ENCODE measurements at regions of chr16 and their contacts with region 1.

Region 1: GRCh38 chr16:47141773-47142485 is 1.8 kb downstream of the NETO2 start:
- DNase-seq: peak; percentile 53 to 83 (median 75)
- ATAC-seq: peak; percentile 86
- H3K4me3 ChIP-seq: peak overlapping the region; percentile 30
- H3K4me3 Mint-ChIP-seq: peak overlapping the region; percentile 72 to 89 (median 84)
- H3K27ac ChIP-seq: no peak overlapping the region
- H3K27ac Mint-ChIP-seq: peak overlapping the region in 2 of 9 donors; percentile 14 to 77
- H3K4me1 ChIP-seq: peaks cover 10 to 15% of the 10 kb centered on the region in 2 donors
- H3K4me1 Mint-ChIP-seq: peaks cover 12 to 29% (median 17%) of the 10 kb centered on the region in 7 donors
- H3K27me3 ChIP-seq: peaks cover 0 to 12% of the 10 kb centered on the region in 2 donors
- H3K27me3 Mint-ChIP-seq: peaks cover 22 to 37% (median 34%) of the 10 kb centered on the region in 5 donors

Region 2: DNA sequence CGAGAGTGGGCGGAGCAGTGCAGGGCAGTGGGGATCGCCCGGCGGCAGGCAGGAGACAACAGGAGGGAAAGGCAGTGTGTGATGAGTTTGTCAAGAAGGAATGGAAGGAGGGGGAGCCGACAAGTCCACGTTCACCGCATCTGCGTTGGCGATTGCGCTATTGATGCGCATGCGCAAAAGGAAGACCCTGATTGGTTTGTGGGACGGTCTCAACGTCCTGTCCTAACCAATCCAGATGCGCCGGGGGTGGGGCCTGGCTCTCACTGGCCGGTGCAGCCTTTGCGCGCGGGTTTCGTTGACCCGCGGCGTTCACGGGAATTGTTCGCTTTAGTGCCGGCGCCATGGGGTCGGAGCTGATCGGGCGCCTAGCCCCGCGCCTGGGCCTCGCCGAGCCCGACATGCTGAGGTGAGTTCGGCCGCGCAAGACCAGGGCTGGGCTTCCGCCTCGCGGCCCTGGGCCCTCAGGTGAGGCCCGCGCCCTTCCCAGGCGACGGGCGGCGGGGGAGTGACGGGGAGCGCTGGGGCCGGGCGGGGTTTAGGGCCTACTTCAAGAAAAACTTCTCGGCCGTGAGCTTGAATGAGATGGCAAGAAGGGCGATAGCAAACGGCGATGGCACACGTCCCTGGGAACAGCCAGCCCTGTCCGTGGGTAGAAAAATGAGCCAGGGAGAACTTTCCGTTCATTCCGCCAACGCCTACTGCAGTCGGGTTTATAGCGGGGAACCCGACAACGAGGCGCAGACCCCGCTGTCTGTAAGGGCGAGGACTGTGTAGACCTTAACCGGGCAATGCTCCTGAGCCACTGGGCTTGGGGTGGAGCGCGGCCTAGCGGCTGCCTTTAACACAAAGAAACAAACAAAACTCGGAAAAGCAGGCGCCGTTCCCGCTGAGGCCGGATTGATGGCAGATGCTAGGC is 452.3 kb before region 1 on chr16 and contains the start of gene ORC6:
- CTCF ChIA-PET with region 1: no interaction called
- POLR2A ChIA-PET with region 1: no interaction called
- intact Hi-C with region 1: loop called in 1 of 2 experiments (anchors 2 kb)
- DNase-seq: peak; percentile 90 to 99 (median 97)
- ATAC-seq: peak; percentile 85
- H3K4me3 ChIP-seq: peak within 1 kb of the TSS; percentile 99
- H3K4me3 Mint-ChIP-seq: no peak within 1 kb of the TSS
- H3K27ac ChIP-seq: peak within 1 kb of the TSS; percentile 94
- H3K27ac Mint-ChIP-seq: no peak within 1 kb of the TSS
- H3K4me1 ChIP-seq: peaks cover 16 to 22% of the 10 kb centered on the region in 2 donors
- H3K4me1 Mint-ChIP-seq: peaks cover 25 to 48% (median 36%) of the 10 kb centered on the region in 7 donors
- H3K27me3 ChIP-seq: no peaks in the 10 kb centered on the region
- H3K27me3 Mint-ChIP-seq: no peaks in the 10 kb centered on the region
- total RNA-seq, gene ORC6: 2.7 to 27.3 (median 5.1) TPM

Region 3: GRCh38 chr16:47037746-47038458 is 104.0 kb before region 1 on chr16:
- CTCF ChIA-PET with region 1: no interaction called
- POLR2A ChIA-PET with region 1: no interaction called
- intact Hi-C with region 1: loop called (anchors 1 kb)
- DNase-seq: peak; percentile 69 to 95 (median 83)
- ATAC-seq: peak; percentile 99
- H3K4me3 ChIP-seq: peak overlapping the region; percentile 62
- H3K4me3 Mint-ChIP-seq: peak overlapping the region; percentile 25 to 85 (median 74)
- H3K27ac ChIP-seq: peak overlapping the region; percentile 27
- H3K27ac Mint-ChIP-seq: peak overlapping the region in 1 of 9 donors; percentile 38
- H3K4me1 ChIP-seq: no peaks in the 10 kb centered on the region
- H3K4me1 Mint-ChIP-seq: peaks cover 0 to 8% (median 4%) of the 10 kb centered on the region in 7 donors
- H3K27me3 ChIP-seq: no peaks in the 10 kb centered on the region
- H3K27me3 Mint-ChIP-seq: peaks cover 0 to 13% (median 0%) of the 10 kb centered on the region in 5 donors

Region 4: DNA sequence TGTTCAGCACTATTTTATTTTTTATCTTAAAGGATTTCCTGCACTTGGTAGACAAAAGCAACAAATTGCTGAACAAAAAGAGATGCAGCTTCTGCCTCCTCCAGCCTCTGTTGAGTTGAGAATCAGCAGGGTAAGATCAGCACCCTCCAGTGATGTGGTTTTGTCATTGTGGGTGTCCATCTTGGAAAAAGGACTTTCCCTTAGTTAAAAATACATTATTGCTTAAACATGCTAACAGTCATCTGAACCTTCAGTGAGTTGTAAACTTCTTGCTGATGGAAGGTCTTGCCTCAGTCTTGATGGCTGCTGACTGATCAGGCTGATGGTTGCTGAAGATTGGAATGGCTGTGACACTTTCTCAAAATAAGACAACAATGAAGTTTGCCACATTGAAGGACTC is 420.4 kb after region 1 on chr16:
- CTCF ChIA-PET with region 1: no interaction called
- POLR2A ChIA-PET with region 1: no interaction called
- intact Hi-C with region 1: no loop called
- DNase-seq: no peak
- ATAC-seq: no peak
- H3K4me3 ChIP-seq: no peak overlapping the region
- H3K4me3 Mint-ChIP-seq: no peak overlapping the region
- H3K27ac ChIP-seq: no peak overlapping the region
- H3K27ac Mint-ChIP-seq: no peak overlapping the region
- H3K4me1 ChIP-seq: peaks cover 9 to 12% of the 10 kb centered on the region in 2 donors
- H3K4me1 Mint-ChIP-seq: peaks cover 27 to 43% (median 34%) of the 10 kb centered on the region in 7 donors
- H3K27me3 ChIP-seq: no peaks in the 10 kb centered on the region
- H3K27me3 Mint-ChIP-seq: no peaks in the 10 kb centered on the region

Region 5: GRCh38 chr16:47592232-47592631 is 450.3 kb after region 1 on chr16:
- CTCF ChIA-PET with region 1: no interaction called
- POLR2A ChIA-PET with region 1: no interaction called
- intact Hi-C with region 1: loop called in 1 of 2 experiments (anchors 5 kb)
- DNase-seq: no peak
- ATAC-seq: no peak
- H3K4me3 ChIP-seq: no peak overlapping the region
- H3K4me3 Mint-ChIP-seq: no peak overlapping the region
- H3K27ac ChIP-seq: no peak overlapping the region
- H3K27ac Mint-ChIP-seq: peak overlapping the region in 2 of 9 donors; percentile 6 to 9
- H3K4me1 ChIP-seq: peaks cover 0 to 7% of the 10 kb centered on the region in 2 donors
- H3K4me1 Mint-ChIP-seq: peaks cover 0 to 12% (median 0%) of the 10 kb centered on the region in 7 donors
- H3K27me3 ChIP-seq: no peaks in the 10 kb centered on the region
- H3K27me3 Mint-ChIP-seq: no peaks in the 10 kb centered on the region

Region 6: GRCh38 chr16:48117217-48118105 is 975.5 kb after region 1 on chr16:
- CTCF ChIA-PET with region 1: interaction called, 4 read pairs
- POLR2A ChIA-PET with region 1: no interaction called
- intact Hi-C with region 1: loop called (anchors 1 kb)
- DNase-seq: peak; percentile 7 to 54 (median 26)
- ATAC-seq: peak; percentile 67
- H3K4me3 ChIP-seq: no peak overlapping the region
- H3K4me3 Mint-ChIP-seq: no peak overlapping the region
- H3K27ac ChIP-seq: no peak overlapping the region
- H3K27ac Mint-ChIP-seq: no peak overlapping the region
- H3K4me1 ChIP-seq: no peaks in the 10 kb centered on the region
- H3K4me1 Mint-ChIP-seq: peaks cover 0 to 3% (median 0%) of the 10 kb centered on the region in 7 donors
- H3K27me3 ChIP-seq: no peaks in the 10 kb centered on the region
- H3K27me3 Mint-ChIP-seq: peaks cover 0 to 16% (median 9%) of the 10 kb centered on the region in 5 donors

Region 7: GRCh38 chr16:48365581-48366164 is 1223.7 kb after region 1 on chr16:
- CTCF ChIA-PET with region 1: no interaction called
- POLR2A ChIA-PET with region 1: no interaction called
- intact Hi-C with region 1: loop called in 1 of 2 experiments (anchors 5 kb)
- DNase-seq: peak; percentile 66 to 86 (median 73)
- ATAC-seq: peak; percentile 95
- H3K4me3 ChIP-seq: peak overlapping the region; percentile 88
- H3K4me3 Mint-ChIP-seq: peak overlapping the region; percentile 83 to 100 (median 94)
- H3K27ac ChIP-seq: peak overlapping the region; percentile 77
- H3K27ac Mint-ChIP-seq: peak overlapping the region; percentile 89 to 100 (median 98)
- H3K4me1 ChIP-seq: peaks cover 14 to 15% of the 10 kb centered on the region in 2 donors
- H3K4me1 Mint-ChIP-seq: peaks cover 24 to 71% (median 54%) of the 10 kb centered on the region in 7 donors
- H3K27me3 ChIP-seq: no peaks in the 10 kb centered on the region
- H3K27me3 Mint-ChIP-seq: no peaks in the 10 kb centered on the region